GM23248 (cell line): ENCODE measurements at regions of chr2 and their contacts with region 1.

Region 1: GRCh38 chr2:121699421-121700333 is 37.0 kb downstream of the NIFK start:
- DNase-seq: peak; percentile 95
- H3K4me3 ChIP-seq: no peak overlapping the region
- H3K27ac ChIP-seq: no peak overlapping the region
- H3K4me1 ChIP-seq: peaks cover 4% of the 10 kb centered on the region
- H3K27me3 ChIP-seq: no peaks in the 10 kb centered on the region

Region 2: DNA sequence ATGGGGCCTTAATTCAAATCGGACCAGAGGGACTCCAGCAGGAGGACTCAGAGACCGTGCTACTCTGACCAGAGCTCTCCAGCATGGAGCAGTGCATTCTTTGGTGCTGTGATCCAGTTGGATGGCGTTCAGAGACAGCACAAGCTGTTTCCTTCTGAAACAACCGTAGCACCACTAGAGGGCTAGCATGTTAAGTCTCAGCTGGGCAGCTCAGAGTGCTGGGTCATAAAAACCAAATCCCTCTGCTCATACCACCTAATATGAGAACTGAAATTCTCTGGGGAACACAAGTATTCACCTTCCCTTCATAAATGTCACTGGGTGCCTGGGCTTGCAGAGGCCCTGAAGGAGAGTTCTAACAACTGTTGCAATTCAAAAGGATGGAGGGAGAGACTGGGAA is 316.9 kb before region 1 on chr2:
- in situ Hi-C with region 1: loop called (anchors 25 kb)
- DNase-seq: no peak
- H3K4me3 ChIP-seq: no peak overlapping the region
- H3K27ac ChIP-seq: no peak overlapping the region
- H3K4me1 ChIP-seq: peaks cover 13% of the 10 kb centered on the region
- H3K27me3 ChIP-seq: no peaks in the 10 kb centered on the region

Region 3: GRCh38 chr2:121530212-121530705 is 169.4 kb before region 1 on chr2:
- in situ Hi-C with region 1: loop called (anchors 25 kb)
- DNase-seq: peak; percentile 91
- H3K4me3 ChIP-seq: peak overlapping the region; percentile 84
- H3K27ac ChIP-seq: peak overlapping the region; percentile 99
- H3K4me1 ChIP-seq: peaks cover 17% of the 10 kb centered on the region
- H3K27me3 ChIP-seq: no peaks in the 10 kb centered on the region